GM12878 (cell line): ENCODE measurements at regions of chr19 and their contacts with region 1.

Region 1: DNA sequence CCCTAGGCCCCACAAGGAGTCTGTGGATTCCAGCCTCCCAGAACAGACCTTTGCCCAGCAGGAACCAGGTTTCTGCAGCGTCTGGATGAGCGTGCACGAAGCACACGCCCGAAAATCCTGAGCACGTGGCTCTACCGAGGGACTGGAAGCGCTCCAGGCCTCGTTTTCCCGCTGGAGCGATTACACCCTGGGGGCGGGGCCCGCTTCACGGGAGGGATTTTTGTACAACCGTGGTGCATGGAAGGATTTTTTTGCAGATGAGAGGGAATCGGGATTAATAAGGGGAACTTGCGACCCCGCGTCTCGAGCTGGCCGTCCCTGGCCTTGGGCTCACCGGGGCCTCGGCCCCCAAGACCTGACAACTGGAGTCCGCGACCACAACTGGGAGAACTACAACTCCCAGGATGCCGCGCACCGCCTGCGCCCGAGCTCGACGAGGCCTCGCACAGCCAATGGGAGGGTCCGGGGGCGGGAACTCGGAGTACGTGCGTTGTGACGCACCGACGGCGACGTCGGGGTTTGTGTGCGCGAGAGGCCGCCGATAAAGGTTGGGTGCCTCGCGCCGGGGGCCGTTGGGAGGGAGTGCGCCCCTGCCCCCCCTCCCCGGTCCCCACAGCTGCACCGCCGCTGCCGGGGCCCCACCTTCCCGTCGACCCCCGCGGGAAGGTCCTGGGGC is at the start of gene ZNF628:
- DNase-seq: peak; percentile 83
- ATAC-seq: peak; percentile 97
- H3K4me3 ChIP-seq: peak within 1 kb of the TSS; percentile 86
- H3K27ac ChIP-seq: peak within 1 kb of the TSS; percentile 74
- H3K4me1 ChIP-seq: peaks cover 22% of the 10 kb centered on the region
- H3K27me3 ChIP-seq: no peaks in the 10 kb centered on the region
- CTCF ChIP-seq: no peak
- EP300 ChIP-seq: no peak
- POLR2A ChIP-seq: peak; percentile 75
- RAD21 ChIP-seq: no peak
- polyA plus RNA-seq, gene ZNF628: 0.04 TPM in 1 of 2 experiments, not detected in the other

Region 2: GRCh38 chr19:55398200-55398925 is 77.9 kb before region 1 on chr19:
- CTCF ChIA-PET with region 1: no interaction called
- POLR2A ChIA-PET with region 1: no interaction called
- RAD21 ChIA-PET with region 1: no interaction called
- SMC1A ChIA-PET with region 1: no interaction called
- in situ Hi-C with region 1: no loop called
- intact Hi-C with region 1: no loop called
- DNase-seq: no peak
- ATAC-seq: peak; percentile 74
- H3K4me3 ChIP-seq: peak overlapping the region; percentile 17; the same call in 1 of the 2 replicates
- H3K27ac ChIP-seq: no peak overlapping the region
- H3K4me1 ChIP-seq: peaks cover 8% of the 10 kb centered on the region
- H3K27me3 ChIP-seq: no peaks in the 10 kb centered on the region
- CTCF ChIP-seq: no peak
- EP300 ChIP-seq: no peak
- POLR2A ChIP-seq: no peak
- RAD21 ChIP-seq: no peak

Region 3: GRCh38 chr19:55461259-55461973 is 14.8 kb before region 1 on chr19 and contains the start of gene ISOC2:
- CTCF ChIA-PET with region 1: interaction called, 34 read pairs
- POLR2A ChIA-PET with region 1: interaction called, 14 read pairs
- RAD21 ChIA-PET with region 1: interaction called, 17 read pairs
- SMC1A ChIA-PET with region 1: interaction called, 6 read pairs
- in situ Hi-C with region 1: no loop called
- intact Hi-C with region 1: no loop called
- DNase-seq: peak; percentile 98
- ATAC-seq: peak; percentile 99
- H3K4me3 ChIP-seq: peak within 1 kb of the TSS; percentile 96
- H3K27ac ChIP-seq: peak within 1 kb of the TSS; percentile 94
- H3K4me1 ChIP-seq: no peaks in the 10 kb centered on the region
- H3K27me3 ChIP-seq: no peaks in the 10 kb centered on the region
- CTCF ChIP-seq: no peak
- EP300 ChIP-seq: no peak
- POLR2A ChIP-seq: peak; percentile 96
- RAD21 ChIP-seq: no peak
- polyA plus RNA-seq, gene ISOC2: 0.72 to 3.0 TPM

Region 4: GRCh38 chr19:55599468-55600279 is 123.4 kb after region 1 on chr19 and contains the start of gene FIZ1:
- CTCF ChIA-PET with region 1: no interaction called
- POLR2A ChIA-PET with region 1: interaction called, 3 read pairs
- RAD21 ChIA-PET with region 1: interaction called, 11 read pairs
- SMC1A ChIA-PET with region 1: interaction called, 4 read pairs
- in situ Hi-C with region 1: no loop called
- intact Hi-C with region 1: no loop called
- DNase-seq: peak; percentile 95
- ATAC-seq: peak; percentile 89
- H3K4me3 ChIP-seq: peak within 1 kb of the TSS; percentile 88
- H3K27ac ChIP-seq: peak within 1 kb of the TSS; percentile 99
- H3K4me1 ChIP-seq: peaks cover 8% of the 10 kb centered on the region; the same call in 1 of the 2 replicates
- H3K27me3 ChIP-seq: no peaks in the 10 kb centered on the region
- CTCF ChIP-seq: no peak
- EP300 ChIP-seq: 0 out of 4 replicates have a peak, but pooled peaks of 1 of the 2 experiments have one; percentile 24
- POLR2A ChIP-seq: peak; percentile 74
- RAD21 ChIP-seq: no peak
- polyA plus RNA-seq, gene FIZ1: 0.60 to 1.5 TPM

Region 5: GRCh38 chr19:55611983-55612645 is 135.9 kb after region 1 on chr19:
- CTCF ChIA-PET with region 1: no interaction called
- POLR2A ChIA-PET with region 1: no interaction called
- RAD21 ChIA-PET with region 1: no interaction called
- SMC1A ChIA-PET with region 1: no interaction called
- in situ Hi-C with region 1: no loop called
- intact Hi-C with region 1: no loop called
- DNase-seq: no peak
- ATAC-seq: peak; percentile 65
- H3K4me3 ChIP-seq: no peak overlapping the region
- H3K27ac ChIP-seq: no peak overlapping the region
- H3K4me1 ChIP-seq: peaks cover 4% of the 10 kb centered on the region
- H3K27me3 ChIP-seq: no peaks in the 10 kb centered on the region
- CTCF ChIP-seq: no peak
- EP300 ChIP-seq: no peak
- POLR2A ChIP-seq: no peak
- RAD21 ChIP-seq: no peak